Posterior vena cava (tissue), 2 donors: ENCODE measurements at regions of chr12 and their contacts with region 1.

Region 1: GRCh38 chr12:58202933-58203718 is 261.8 kb downstream of the ATP23 start:
- DNase-seq: no peak

Region 2: GRCh38 chr12:56626701-56627100 is 1576.4 kb before region 1 on chr12:
- intact Hi-C with region 1: no loop called
- DNase-seq: no peak

Region 3: GRCh38 chr12:58139894-58140293 is 63.2 kb before region 1 on chr12:
- intact Hi-C with region 1: loop called in 1 of 2 experiments (anchors 2 kb)
- DNase-seq: no peak

Region 4: GRCh38 chr12:58247638-58248037 is 44.5 kb after region 1 on chr12:
- intact Hi-C with region 1: no loop called
- DNase-seq: no peak